ENCODE measurements at regions of chr2 and their contacts with region 1.

Region 1: DNA sequence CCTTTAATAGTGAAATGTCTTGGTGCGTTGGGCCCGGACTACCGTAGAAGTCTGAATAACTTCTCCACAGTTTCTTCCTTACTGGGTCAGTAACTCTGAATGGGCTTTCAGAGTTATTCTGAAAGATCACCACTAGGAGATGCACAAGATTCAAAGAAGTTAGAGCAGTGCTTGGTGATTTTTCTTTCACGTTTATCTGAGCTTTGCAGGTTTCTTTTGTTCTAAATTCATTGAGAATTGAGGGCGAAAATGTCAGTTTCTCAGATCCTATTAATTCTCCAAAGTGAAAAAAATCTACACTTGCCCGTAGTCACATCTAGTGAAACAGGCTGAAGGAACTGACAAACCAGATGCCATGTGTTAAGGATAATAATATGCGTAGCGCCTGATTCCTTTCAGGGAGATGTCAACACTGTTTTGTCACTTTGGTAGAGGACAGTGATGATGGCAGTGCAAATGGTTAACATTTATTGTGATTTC is 70.1 kb downstream of the QPCT start:
- DNase-seq: peak; percentile 31
- H3K4me3 ChIP-seq: no peak overlapping the region
- H3K27me3 ChIP-seq: no peaks in the 10 kb centered on the region
- CTCF ChIP-seq: peak; percentile 87

Region 2: DNA sequence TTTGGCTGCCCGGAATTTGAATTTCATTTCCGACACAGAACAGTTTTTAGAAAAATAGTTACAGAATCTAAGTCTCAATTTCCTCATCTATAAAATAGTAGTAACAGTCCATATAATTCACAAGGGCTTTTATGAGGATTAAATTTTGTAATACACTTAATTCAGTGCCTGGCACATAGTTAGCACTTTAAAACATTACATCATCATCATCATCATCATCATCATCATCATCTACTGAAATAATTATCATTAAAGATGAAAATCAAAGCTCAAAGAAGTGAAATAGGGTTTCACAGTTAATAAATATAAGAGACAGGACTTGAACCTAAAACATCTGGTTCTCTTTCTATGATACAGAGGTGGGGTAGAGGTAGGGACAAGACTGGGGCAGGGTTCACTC is 343.6 kb before region 1 on chr2:
- CTCF ChIA-PET with region 1: no interaction called
- POLR2A ChIA-PET with region 1: no interaction called
- DNase-seq: no peak
- H3K4me3 ChIP-seq: no peak overlapping the region
- H3K27me3 ChIP-seq: no peaks in the 10 kb centered on the region
- CTCF ChIP-seq: no peak

Region 3: DNA sequence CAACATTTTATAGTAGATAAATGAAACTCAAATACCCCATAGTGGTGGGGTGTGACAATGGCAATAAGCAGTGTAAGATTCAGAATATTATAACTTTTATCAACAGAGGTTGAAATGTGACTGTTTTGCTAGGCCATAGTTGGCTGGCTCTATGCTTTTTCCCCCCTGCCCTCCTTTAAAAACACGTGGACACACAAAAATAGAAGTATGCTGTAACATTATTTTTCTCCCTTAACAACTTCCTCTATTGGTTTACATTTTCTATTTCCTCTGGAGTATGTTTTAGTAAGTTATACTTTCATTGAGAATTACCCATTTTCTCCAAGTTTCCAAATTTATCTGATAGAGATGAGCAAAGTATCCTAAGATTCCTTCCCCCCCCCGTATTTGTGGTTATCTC is 152.0 kb before region 1 on chr2:
- CTCF ChIA-PET with region 1: no interaction called
- POLR2A ChIA-PET with region 1: no interaction called
- DNase-seq: no peak
- H3K4me3 ChIP-seq: no peak overlapping the region
- H3K27me3 ChIP-seq: no peaks in the 10 kb centered on the region
- CTCF ChIP-seq: no peak

Region 4: DNA sequence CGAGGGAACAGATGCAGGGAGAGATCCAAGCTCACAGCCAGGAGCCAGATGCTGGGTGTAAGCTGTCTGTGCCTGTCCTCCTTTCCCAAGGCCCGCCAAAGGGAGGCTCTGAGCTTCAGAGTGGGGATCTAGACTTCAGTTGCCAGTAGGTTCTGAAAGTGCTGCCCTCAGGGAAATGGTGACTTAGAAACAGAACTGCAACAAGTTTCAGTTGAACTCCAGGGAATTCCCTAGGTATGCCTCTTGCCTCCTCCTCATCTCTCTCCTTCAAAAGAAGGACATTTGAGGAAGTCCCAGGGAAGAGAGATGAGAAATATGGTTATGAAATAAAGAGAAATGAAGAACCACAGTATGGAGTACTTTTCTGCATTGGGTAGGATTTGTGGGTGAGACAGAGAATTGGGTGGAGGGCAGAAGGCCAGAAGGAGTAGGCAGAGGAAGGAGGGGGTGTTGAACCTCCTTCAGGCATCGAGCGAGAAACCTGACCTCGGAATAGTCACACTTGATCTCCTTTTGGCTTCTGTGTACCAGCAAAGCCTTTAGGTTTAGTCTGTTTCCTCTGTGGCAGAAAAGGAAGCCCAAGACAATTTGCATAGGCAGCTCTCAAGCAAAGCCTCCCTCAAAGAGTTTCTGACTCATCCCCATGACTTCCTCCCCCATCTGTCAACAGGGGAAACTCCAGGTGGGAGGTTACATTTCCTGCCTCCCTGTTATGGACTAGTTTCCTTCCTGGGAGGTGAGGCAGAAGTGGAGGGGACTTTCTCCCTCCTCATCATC is 24.3 kb before region 1 on chr2:
- CTCF ChIA-PET with region 1: interaction called, 25 read pairs
- POLR2A ChIA-PET with region 1: no interaction called
- DNase-seq: no peak
- H3K4me3 ChIP-seq: no peak overlapping the region
- H3K27me3 ChIP-seq: no peaks in the 10 kb centered on the region; the same call in 1 of the 2 replicates
- CTCF ChIP-seq: no peak

Region 5: GRCh38 chr2:37402636-37403035 is 11.9 kb before region 1 on chr2:
- CTCF ChIA-PET with region 1: interaction called, 25 read pairs
- POLR2A ChIA-PET with region 1: no interaction called
- DNase-seq: no peak
- H3K4me3 ChIP-seq: no peak overlapping the region
- H3K27me3 ChIP-seq: no peaks in the 10 kb centered on the region
- CTCF ChIP-seq: no peak

Region 6: GRCh38 chr2:37425408-37425807 is 10.9 kb after region 1 on chr2:
- CTCF ChIA-PET with region 1: no interaction called
- POLR2A ChIA-PET with region 1: no interaction called
- DNase-seq: no peak
- H3K4me3 ChIP-seq: no peak overlapping the region
- H3K27me3 ChIP-seq: no peaks in the 10 kb centered on the region
- CTCF ChIP-seq: no peak

Region 7: DNA sequence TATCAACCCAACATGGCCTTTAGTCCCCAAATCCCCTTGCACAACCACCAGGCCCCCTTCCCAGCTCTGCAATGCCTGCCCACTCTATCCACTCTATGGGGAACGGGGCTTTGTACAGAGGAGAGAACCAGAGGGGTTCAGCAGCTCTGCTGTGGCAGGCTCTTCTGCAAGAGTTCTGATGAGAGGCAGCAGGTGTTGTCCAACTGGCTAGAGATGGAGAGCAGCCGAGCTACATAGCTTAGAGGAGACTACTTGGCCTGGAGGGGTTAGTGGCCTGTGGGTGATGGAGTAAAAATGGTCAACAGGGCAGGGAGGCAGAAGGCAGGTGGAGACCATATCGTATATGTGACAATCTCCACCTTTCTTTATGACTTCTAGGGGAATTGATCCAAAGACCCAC is 32.9 kb after region 1 on chr2:
- CTCF ChIA-PET with region 1: no interaction called
- POLR2A ChIA-PET with region 1: no interaction called
- DNase-seq: no peak
- H3K4me3 ChIP-seq: no peak overlapping the region
- H3K27me3 ChIP-seq: peaks cover 2% of the 10 kb centered on the region; the same call in 1 of the 2 replicates
- CTCF ChIP-seq: no peak

Region 8: DNA sequence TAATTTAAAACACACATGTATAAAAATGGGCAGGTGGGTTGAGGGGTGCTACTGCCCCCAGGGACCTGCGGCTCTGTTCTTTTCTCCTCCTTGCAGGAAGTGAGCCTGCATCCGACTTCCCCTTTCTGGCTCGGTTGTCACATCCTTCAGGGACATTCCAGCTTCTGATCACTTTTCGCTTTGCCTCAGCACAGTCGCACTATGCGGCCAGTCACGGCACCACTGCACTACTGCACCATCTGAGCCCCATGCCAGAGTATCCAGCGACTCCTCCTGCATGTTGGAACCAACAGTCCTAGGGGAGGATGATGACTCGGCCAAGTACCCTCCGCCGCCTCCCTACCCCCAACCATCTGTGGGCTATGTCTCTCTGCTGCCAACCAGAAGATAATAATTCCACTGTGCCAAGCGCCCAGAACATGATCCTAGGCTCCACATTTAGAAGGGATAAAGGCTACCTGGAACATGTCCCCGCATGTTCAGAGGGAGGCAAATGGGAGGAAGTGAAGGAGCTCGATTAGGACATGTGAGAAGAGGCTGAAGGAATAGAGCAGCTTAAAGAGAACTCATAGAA is 239.4 kb after region 1 on chr2:
- CTCF ChIA-PET with region 1: interaction called, 27 read pairs
- POLR2A ChIA-PET with region 1: interaction called, 3 read pairs
- DNase-seq: no peak
- H3K4me3 ChIP-seq: no peak overlapping the region
- H3K27me3 ChIP-seq: no peaks in the 10 kb centered on the region
- CTCF ChIP-seq: no peak

Region 9: DNA sequence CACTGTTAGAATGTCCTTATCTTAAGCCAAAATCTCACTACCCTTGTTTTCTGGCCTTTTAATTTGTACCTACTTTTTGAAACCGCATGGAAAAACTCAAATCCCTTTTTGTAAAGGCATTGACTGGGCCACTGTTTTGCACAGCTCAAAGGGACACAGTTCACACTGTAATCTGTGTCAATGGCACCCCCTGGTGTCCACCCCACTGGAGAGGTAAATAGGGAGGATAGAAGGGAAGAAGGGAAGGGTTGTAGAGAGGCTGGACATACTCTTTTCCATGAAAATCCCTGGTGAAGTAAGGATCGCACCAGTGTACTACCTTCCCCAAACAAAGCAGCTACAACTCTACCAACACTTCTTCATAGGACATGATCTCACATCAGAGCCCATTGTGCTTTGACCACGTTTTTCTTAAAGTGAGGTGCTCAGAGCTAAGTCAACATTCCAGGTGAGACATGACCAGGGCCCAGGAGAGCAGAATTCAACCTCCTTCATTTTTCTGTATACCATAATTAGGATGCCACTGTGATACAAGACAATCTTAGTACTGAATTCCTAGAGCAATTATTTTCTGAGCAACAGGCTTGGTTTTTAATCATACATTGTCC is 418.2 kb after region 1 on chr2:
- CTCF ChIA-PET with region 1: interaction called, 149 read pairs
- POLR2A ChIA-PET with region 1: no interaction called
- DNase-seq: no peak
- H3K4me3 ChIP-seq: no peak overlapping the region
- H3K27me3 ChIP-seq: no peaks in the 10 kb centered on the region
- CTCF ChIP-seq: peak; percentile 74

Measured in BJ (cell line).